Adrenal gland (tissue), 19 donors: ENCODE measurements at regions of chrX and their contacts with region 1.

Region 1: GRCh38 chrX:73855546-73855945 is 292.5 kb downstream of the CHIC1 start:
- DNase-seq: peak; percentile 66 to 85 (median 76)
- H3K4me3 ChIP-seq: no peak overlapping the region
- H3K27ac ChIP-seq: no peak overlapping the region
- H3K4me1 ChIP-seq: no peaks in the 10 kb centered on the region
- H3K27me3 ChIP-seq: no peaks in the 10 kb centered on the region
- CTCF ChIP-seq: peak; percentile 68 to 84 (median 74)
- POLR2A ChIP-seq: no peak

Region 2: GRCh38 chrX:74133156-74133796 is 277.7 kb after region 1 on chrX:
- intact Hi-C with region 1: loop called in 1 of 2 experiments (anchors 10 kb)
- DNase-seq: peak in 5 of 7 donors; percentile 8 to 31 (median 27)
- H3K4me3 ChIP-seq: no peak overlapping the region
- H3K27ac ChIP-seq: no peak overlapping the region
- H3K4me1 ChIP-seq: no peaks in the 10 kb centered on the region
- H3K27me3 ChIP-seq: no peaks in the 10 kb centered on the region
- CTCF ChIP-seq: peak; percentile 61 to 86 (median 75)
- POLR2A ChIP-seq: no peak

Region 3: DNA sequence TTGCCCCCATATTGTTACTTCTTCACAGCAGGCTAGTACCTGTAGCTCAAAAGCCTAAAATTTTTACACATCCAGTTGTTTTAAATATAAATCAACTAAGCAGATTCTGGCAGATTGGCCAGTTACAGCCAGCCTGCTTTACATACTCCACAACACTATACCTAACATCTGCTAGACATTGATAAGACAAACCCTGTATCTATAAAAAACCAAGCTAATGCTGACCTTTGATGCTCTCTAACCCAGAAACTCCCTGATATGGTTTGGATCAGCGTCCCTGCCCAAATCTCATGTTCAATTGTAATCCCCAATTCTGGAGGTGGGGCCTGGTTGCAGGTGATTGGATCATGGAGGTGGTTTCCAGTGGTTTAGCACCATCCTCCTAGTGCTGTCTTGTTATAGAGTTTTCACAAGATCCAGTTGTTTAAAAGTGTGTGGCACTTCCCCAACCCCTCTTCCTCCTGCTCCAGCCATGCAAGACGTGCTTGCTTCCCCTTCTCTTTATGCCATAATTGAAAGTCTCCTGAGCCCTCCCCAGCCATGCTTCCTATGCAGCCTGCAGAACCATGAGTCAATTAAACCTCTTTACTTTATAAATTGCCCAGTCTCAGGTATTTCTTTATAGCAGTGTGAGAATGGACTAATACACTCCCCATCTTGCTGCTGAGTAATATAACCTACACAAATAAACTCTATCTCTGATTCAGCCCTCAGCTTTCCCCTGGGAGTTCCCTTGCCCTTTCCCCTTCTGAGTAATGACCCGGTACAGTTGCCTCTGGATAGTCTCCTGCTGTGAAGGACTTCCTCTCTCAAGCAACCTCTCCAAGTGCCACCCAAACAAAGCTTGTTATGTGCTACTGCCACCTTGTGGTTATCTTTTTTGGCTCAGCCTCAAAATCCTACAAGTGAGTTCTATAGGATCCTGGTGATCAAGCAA is 488.1 kb after region 1 on chrX:
- intact Hi-C with region 1: loop called in 1 of 2 experiments (anchors 10 kb)
- DNase-seq: peak; percentile 53 to 79 (median 74)
- H3K4me3 ChIP-seq: no peak overlapping the region
- H3K27ac ChIP-seq: no peak overlapping the region
- H3K4me1 ChIP-seq: no peaks in the 10 kb centered on the region
- H3K27me3 ChIP-seq: peaks cover 9% of the 10 kb centered on the region
- CTCF ChIP-seq: peak; percentile 50 to 69 (median 60)
- POLR2A ChIP-seq: no peak